Caco-2 (cell line): ENCODE measurements at regions of chr11 and their contacts with region 1.

Region 1: DNA sequence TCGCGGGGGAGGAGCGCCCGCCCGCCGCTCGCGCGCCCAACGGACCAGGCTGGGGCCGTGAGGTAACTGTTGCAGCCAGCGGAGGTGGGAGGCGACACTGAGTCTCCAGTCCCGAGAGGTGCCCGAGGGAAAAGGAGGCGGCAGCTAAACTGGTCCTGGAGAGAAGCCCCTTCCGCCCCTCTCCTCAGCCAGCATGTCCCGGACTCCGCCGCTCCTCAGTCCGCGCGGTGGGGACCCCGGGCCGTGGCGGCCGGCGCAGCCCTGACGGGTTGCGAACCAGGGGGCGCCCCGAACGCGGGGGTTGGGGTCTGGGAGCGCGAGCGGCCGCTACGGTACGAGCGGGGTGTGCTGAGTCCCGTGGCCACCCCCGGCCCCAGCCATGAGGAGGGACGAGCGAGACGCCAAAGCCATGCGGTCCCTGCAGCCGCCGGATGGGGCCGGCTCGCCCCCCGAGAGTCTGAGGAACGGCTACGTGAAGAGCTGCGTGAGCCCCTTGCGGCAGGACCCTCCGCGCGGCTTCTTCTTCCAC is at the start of gene PDE3B:
- DNase-seq: peak; percentile 92 to 93
- H3K4me3 ChIP-seq: peak within 1 kb of the TSS; percentile 97
- H3K4me3 Mint-ChIP-seq: peak within 1 kb of the TSS; percentile 65
- H3K27ac Mint-ChIP-seq: peak within 1 kb of the TSS; percentile 62
- H3K4me1 ChIP-seq: peaks cover 17% of the 10 kb centered on the region; the same call in 1 of the 2 replicates
- H3K4me1 Mint-ChIP-seq: peaks cover 15% of the 10 kb centered on the region
- H3K27me3 ChIP-seq: no peaks in the 10 kb centered on the region
- H3K27me3 Mint-ChIP-seq: no peaks in the 10 kb centered on the region
- CTCF ChIP-seq: peak; percentile 5 to 15
- total RNA-seq, gene PDE3B: 20.6 and 21.8 TPM in 2 replicates

Region 2: GRCh38 chr11:14519917-14520746 is 123.6 kb before region 1 on chr11 and contains the start of gene PSMA1:
- CTCF ChIA-PET with region 1: no interaction called
- POLR2A ChIA-PET with region 1: interaction called, 6 read pairs
- intact Hi-C with region 1: loop called (anchors 5 kb)
- DNase-seq: peak; percentile 95 to 96
- H3K4me3 ChIP-seq: peak within 1 kb of the TSS; percentile 80
- H3K4me3 Mint-ChIP-seq: peak within 1 kb of the TSS; percentile 76
- H3K27ac Mint-ChIP-seq: peak within 1 kb of the TSS; percentile 96
- H3K4me1 ChIP-seq: peaks cover 6% of the 10 kb centered on the region; the same call in 1 of the 2 replicates
- H3K4me1 Mint-ChIP-seq: peaks cover 11% of the 10 kb centered on the region
- H3K27me3 ChIP-seq: no peaks in the 10 kb centered on the region
- H3K27me3 Mint-ChIP-seq: no peaks in the 10 kb centered on the region
- CTCF ChIP-seq: peak in 1 of 2 experiments; percentile 13
- total RNA-seq, gene PSMA1: 189 and 194 TPM in 2 replicates

Region 3: GRCh38 chr11:14537134-14537599 is 106.6 kb before region 1 on chr11:
- CTCF ChIA-PET with region 1: no interaction called
- POLR2A ChIA-PET with region 1: no interaction called
- intact Hi-C with region 1: loop called (anchors 1 kb)
- DNase-seq: peak in 1 of 2 experiments; percentile 47
- H3K4me3 ChIP-seq: no peak overlapping the region
- H3K4me3 Mint-ChIP-seq: no peak overlapping the region
- H3K27ac Mint-ChIP-seq: no peak overlapping the region
- H3K4me1 ChIP-seq: no peaks in the 10 kb centered on the region
- H3K4me1 Mint-ChIP-seq: no peaks in the 10 kb centered on the region
- H3K27me3 ChIP-seq: no peaks in the 10 kb centered on the region
- H3K27me3 Mint-ChIP-seq: no peaks in the 10 kb centered on the region
- CTCF ChIP-seq: peak; percentile 66 to 79

Region 4: DNA sequence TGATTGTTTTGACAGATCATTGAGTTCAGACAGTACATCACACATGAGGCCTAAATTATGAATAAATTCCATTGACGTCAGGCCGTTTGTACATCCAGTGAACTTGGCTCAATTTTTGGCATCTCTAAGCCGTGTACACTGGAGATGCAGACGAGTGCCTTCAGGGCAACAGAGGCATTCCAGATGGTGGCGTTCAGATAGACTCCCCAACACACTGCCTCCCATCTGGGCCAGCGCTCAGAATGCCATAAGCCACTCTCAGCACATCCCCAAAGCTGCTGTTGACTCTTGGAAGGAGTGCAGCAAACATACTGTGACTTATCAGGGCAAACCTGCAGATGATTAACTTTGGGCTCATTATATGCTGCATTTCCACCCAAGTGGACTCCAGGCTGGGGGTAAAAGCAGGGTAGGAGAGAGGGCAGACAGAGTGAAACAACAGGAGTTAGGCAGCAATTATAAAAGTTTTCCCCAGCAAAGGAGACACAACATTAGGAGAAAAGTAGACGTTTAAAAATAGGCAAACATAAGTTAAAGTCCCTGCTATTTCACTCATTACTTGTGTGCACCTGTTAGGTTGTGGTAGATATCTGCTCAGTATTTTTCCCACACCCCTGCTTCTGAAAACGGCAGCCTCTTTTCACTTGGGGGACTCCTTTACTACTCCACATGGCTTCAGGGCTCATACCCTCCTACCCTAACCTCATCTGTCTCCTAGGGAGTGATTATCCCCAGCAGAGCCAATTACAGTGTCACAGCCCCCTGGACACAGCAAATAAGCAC is 60.3 kb before region 1 on chr11:
- CTCF ChIA-PET with region 1: no interaction called
- POLR2A ChIA-PET with region 1: no interaction called
- intact Hi-C with region 1: loop called (anchors 5 kb)
- DNase-seq: peak; percentile 57 to 73
- H3K4me3 ChIP-seq: no peak overlapping the region
- H3K4me3 Mint-ChIP-seq: peak overlapping the region; percentile 6
- H3K27ac Mint-ChIP-seq: peak overlapping the region; percentile 32
- H3K4me1 ChIP-seq: peaks cover 33% of the 10 kb centered on the region
- H3K4me1 Mint-ChIP-seq: peaks cover 18% of the 10 kb centered on the region
- H3K27me3 ChIP-seq: no peaks in the 10 kb centered on the region
- H3K27me3 Mint-ChIP-seq: no peaks in the 10 kb centered on the region
- CTCF ChIP-seq: no peak

Region 5: DNA sequence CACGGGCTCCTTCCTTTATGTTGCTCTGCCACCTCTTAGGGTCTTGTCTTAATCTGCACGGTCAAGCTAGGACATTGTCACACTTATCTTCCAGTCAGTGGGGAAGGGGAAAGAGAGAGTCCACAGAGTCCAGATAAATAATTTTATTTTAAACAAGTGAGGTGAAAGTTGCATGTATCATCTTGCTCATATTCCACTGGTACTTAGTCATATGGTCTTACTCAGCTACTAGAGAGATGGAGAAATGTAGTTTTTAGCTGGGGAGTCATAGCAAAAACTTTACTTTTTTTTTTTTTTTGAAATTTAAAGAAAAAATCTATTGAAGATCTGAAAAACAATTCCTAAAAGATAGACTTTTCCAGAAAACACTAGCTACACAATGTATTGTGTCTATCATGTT is 28.9 kb after region 1 on chr11:
- CTCF ChIA-PET with region 1: no interaction called
- POLR2A ChIA-PET with region 1: no interaction called
- intact Hi-C with region 1: no loop called
- DNase-seq: no peak
- H3K4me3 ChIP-seq: no peak overlapping the region
- H3K4me3 Mint-ChIP-seq: no peak overlapping the region
- H3K27ac Mint-ChIP-seq: no peak overlapping the region
- H3K4me1 ChIP-seq: peaks cover 20% of the 10 kb centered on the region
- H3K4me1 Mint-ChIP-seq: peaks cover 19% of the 10 kb centered on the region
- H3K27me3 ChIP-seq: no peaks in the 10 kb centered on the region
- H3K27me3 Mint-ChIP-seq: no peaks in the 10 kb centered on the region
- CTCF ChIP-seq: no peak

Region 6: GRCh38 chr11:14703731-14704130 is 60.0 kb after region 1 on chr11:
- CTCF ChIA-PET with region 1: no interaction called
- POLR2A ChIA-PET with region 1: no interaction called
- intact Hi-C with region 1: no loop called
- DNase-seq: no peak
- H3K4me3 ChIP-seq: no peak overlapping the region
- H3K4me3 Mint-ChIP-seq: no peak overlapping the region
- H3K27ac Mint-ChIP-seq: no peak overlapping the region
- H3K4me1 ChIP-seq: no peaks in the 10 kb centered on the region
- H3K4me1 Mint-ChIP-seq: no peaks in the 10 kb centered on the region
- H3K27me3 ChIP-seq: no peaks in the 10 kb centered on the region
- H3K27me3 Mint-ChIP-seq: no peaks in the 10 kb centered on the region
- CTCF ChIP-seq: no peak

Region 7: GRCh38 chr11:14773755-14774154 is 130.0 kb after region 1 on chr11:
- CTCF ChIA-PET with region 1: interaction called, 3 read pairs
- POLR2A ChIA-PET with region 1: no interaction called
- intact Hi-C with region 1: loop called (anchors 10 kb)
- DNase-seq: peak in 1 of 2 experiments; percentile 5
- H3K4me3 ChIP-seq: no peak overlapping the region
- H3K4me3 Mint-ChIP-seq: no peak overlapping the region
- H3K27ac Mint-ChIP-seq: no peak overlapping the region
- H3K4me1 ChIP-seq: no peaks in the 10 kb centered on the region
- H3K4me1 Mint-ChIP-seq: peaks cover 7% of the 10 kb centered on the region
- H3K27me3 ChIP-seq: no peaks in the 10 kb centered on the region
- H3K27me3 Mint-ChIP-seq: no peaks in the 10 kb centered on the region
- CTCF ChIP-seq: peak; percentile 37 to 39

Region 8: DNA sequence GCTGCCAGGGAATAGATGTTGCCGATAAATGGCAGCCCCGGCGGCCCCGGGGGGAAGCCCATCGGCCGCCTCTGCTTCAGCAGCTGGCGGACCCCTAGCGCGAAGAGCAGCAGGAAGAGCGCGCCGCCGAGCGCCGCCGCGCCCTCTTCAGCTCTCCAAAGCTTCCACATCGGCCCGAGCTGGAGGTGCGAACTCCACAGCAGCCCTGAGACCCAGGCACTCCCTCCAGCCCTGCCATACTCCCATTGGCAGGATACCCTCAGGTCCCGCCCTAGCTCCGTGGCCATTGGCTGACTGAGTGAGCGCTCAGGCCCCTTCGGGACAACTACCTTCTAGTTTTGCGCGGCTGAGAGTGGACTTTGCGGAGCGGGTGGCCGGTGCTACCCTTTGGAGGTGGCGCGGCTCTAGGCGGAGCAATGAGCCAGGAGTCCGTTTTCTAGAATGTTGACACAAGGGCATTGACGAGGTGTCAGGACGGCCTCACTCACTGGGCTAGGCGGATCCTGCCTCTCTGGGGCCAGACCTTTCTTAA is 248.3 kb after region 1 on chr11 and contains the start of gene CYP2R1:
- CTCF ChIA-PET with region 1: interaction called, 3 read pairs
- POLR2A ChIA-PET with region 1: interaction called, 3 read pairs
- intact Hi-C with region 1: loop called (anchors 1 kb)
- DNase-seq: peak; percentile 99
- H3K4me3 ChIP-seq: peak within 1 kb of the TSS; percentile 78
- H3K4me3 Mint-ChIP-seq: peak within 1 kb of the TSS; percentile 99
- H3K27ac Mint-ChIP-seq: peak within 1 kb of the TSS; percentile 88
- H3K4me1 ChIP-seq: peaks cover 27% of the 10 kb centered on the region
- H3K4me1 Mint-ChIP-seq: peaks cover 26% of the 10 kb centered on the region
- H3K27me3 ChIP-seq: no peaks in the 10 kb centered on the region
- H3K27me3 Mint-ChIP-seq: no peaks in the 10 kb centered on the region
- CTCF ChIP-seq: no peak
- total RNA-seq, gene CYP2R1: 33.0 and 34.5 TPM in 2 replicates

Region 9: GRCh38 chr11:15563054-15563453 is 919.3 kb after region 1 on chr11:
- CTCF ChIA-PET with region 1: no interaction called
- POLR2A ChIA-PET with region 1: no interaction called
- intact Hi-C with region 1: no loop called
- DNase-seq: no peak
- H3K4me3 ChIP-seq: no peak overlapping the region
- H3K4me3 Mint-ChIP-seq: no peak overlapping the region
- H3K27ac Mint-ChIP-seq: no peak overlapping the region
- H3K4me1 ChIP-seq: no peaks in the 10 kb centered on the region
- H3K4me1 Mint-ChIP-seq: no peaks in the 10 kb centered on the region
- H3K27me3 ChIP-seq: no peaks in the 10 kb centered on the region
- H3K27me3 Mint-ChIP-seq: peaks cover 22% of the 10 kb centered on the region
- CTCF ChIP-seq: no peak